ENCODE measurements at regions of chr22 and their contacts with region 1.

Region 1: GRCh38 chr22:41403532-41404318 is 22.0 kb downstream of the TEF start:
- DNase-seq: peak; percentile 58
- ATAC-seq: peak; percentile 97
- H3K4me3 ChIP-seq: no peak overlapping the region
- H3K27ac ChIP-seq: no peak overlapping the region
- H3K4me1 ChIP-seq: peaks cover 14% of the 10 kb centered on the region
- H3K27me3 ChIP-seq: no peaks in the 10 kb centered on the region
- CTCF ChIP-seq: peak; percentile 97 to 98 (median 97); a peak in 5 of 6 replicates
- EP300 ChIP-seq: no peak
- POLR2A ChIP-seq: no peak
- RAD21 ChIP-seq: peak; percentile 95

Region 2: DNA sequence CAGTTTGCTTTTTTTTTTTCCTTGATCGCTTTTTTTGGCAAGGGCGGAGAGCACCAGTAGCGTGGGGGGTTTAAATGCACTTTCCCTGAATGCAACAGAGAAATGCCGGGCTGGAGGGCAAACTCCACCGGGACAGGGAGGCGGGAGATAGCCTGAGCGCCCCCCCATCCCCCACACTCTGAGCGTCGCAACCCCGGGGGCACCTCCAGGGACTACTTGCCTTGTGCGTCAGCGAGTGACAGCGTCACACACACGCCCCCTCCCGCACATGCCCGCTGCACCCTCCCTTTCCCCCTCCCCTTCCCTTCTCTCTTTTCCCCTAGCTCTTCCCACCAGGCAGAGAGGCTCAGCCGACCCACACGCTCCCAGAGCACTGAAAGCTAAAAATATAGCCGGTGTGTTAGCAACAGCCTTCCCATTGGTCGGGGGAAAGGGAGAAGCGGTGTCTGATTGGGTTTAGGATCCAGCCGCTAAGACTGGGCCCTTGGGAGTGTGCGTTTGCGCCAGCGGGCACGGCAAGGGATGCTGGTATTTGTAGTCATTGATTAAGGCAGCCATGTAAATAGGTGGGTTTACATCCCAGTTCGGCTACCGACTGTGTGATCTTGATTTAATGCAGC is 44.6 kb after region 1 on chr22:
- CTCF ChIA-PET with region 1: interaction called, 26 read pairs
- POLR2A ChIA-PET with region 1: interaction called, 5 read pairs
- RAD21 ChIA-PET with region 1: interaction called, 12 read pairs
- SMC1A ChIA-PET with region 1: interaction called, 13 read pairs
- in situ Hi-C with region 1: no loop called
- intact Hi-C with region 1: loop called (anchors 2 kb)
- DNase-seq: peak; percentile 99
- ATAC-seq: peak; percentile 70
- H3K4me3 ChIP-seq: peak overlapping the region; percentile 86
- H3K27ac ChIP-seq: peak overlapping the region; percentile 88
- H3K4me1 ChIP-seq: no peaks in the 10 kb centered on the region
- H3K27me3 ChIP-seq: no peaks in the 10 kb centered on the region
- CTCF ChIP-seq: no peak
- EP300 ChIP-seq: peak; percentile 9 to 63; a peak in 2 of 4 replicates
- POLR2A ChIP-seq: no peak
- RAD21 ChIP-seq: no peak

Region 3: GRCh38 chr22:41468381-41469217 is 64.9 kb after region 1 on chr22 and contains the starts of genes ACO2 and PHF5A:
- CTCF ChIA-PET with region 1: interaction called, 23 read pairs
- POLR2A ChIA-PET with region 1: interaction called, 4 read pairs
- RAD21 ChIA-PET with region 1: interaction called, 13 read pairs
- SMC1A ChIA-PET with region 1: interaction called, 9 read pairs
- in situ Hi-C with region 1: no loop called
- intact Hi-C with region 1: no loop called
- DNase-seq: peak; percentile 98
- ATAC-seq: peak; percentile 95
- H3K4me3 ChIP-seq: peak within 1 kb of the TSS; percentile 80
- H3K27ac ChIP-seq: peak within 1 kb of the TSS; percentile 97
- H3K4me1 ChIP-seq: peaks cover 14% of the 10 kb centered on the region
- H3K27me3 ChIP-seq: no peaks in the 10 kb centered on the region
- CTCF ChIP-seq: no peak
- EP300 ChIP-seq: peak in 1 of 2 experiments; percentile 32; a peak in 1 of 4 replicates
- POLR2A ChIP-seq: peak; percentile 81
- RAD21 ChIP-seq: no peak
- polyA plus RNA-seq, gene ACO2: 21.4 to 22.3 TPM
- polyA plus RNA-seq, gene PHF5A: 40.5 to 77.0 TPM

Region 4: GRCh38 chr22:41501209-41501608 is 97.5 kb after region 1 on chr22:
- CTCF ChIA-PET with region 1: interaction called, 58 read pairs
- POLR2A ChIA-PET with region 1: interaction called, 3 read pairs
- RAD21 ChIA-PET with region 1: interaction called, 60 read pairs
- SMC1A ChIA-PET with region 1: interaction called, 62 read pairs
- in situ Hi-C with region 1: no loop called
- intact Hi-C with region 1: loop called (anchors 1 kb)
- DNase-seq: peak; percentile 27
- ATAC-seq: peak; percentile 93
- H3K4me3 ChIP-seq: no peak overlapping the region
- H3K27ac ChIP-seq: no peak overlapping the region
- H3K4me1 ChIP-seq: no peaks in the 10 kb centered on the region
- H3K27me3 ChIP-seq: no peaks in the 10 kb centered on the region
- CTCF ChIP-seq: peak; percentile 46 to 71 (median 52); a peak in 5 of 6 replicates
- EP300 ChIP-seq: no peak
- POLR2A ChIP-seq: no peak
- RAD21 ChIP-seq: peak; percentile 67

Region 5: GRCh38 chr22:41526837-41527799 is 123.4 kb after region 1 on chr22:
- CTCF ChIA-PET with region 1: interaction called, 105 read pairs
- POLR2A ChIA-PET with region 1: no interaction called
- RAD21 ChIA-PET with region 1: interaction called, 46 read pairs
- SMC1A ChIA-PET with region 1: interaction called, 27 read pairs
- in situ Hi-C with region 1: no loop called
- intact Hi-C with region 1: no loop called
- DNase-seq: no peak
- ATAC-seq: peak; percentile 81
- H3K4me3 ChIP-seq: no peak overlapping the region
- H3K27ac ChIP-seq: no peak overlapping the region
- H3K4me1 ChIP-seq: no peaks in the 10 kb centered on the region
- H3K27me3 ChIP-seq: no peaks in the 10 kb centered on the region
- CTCF ChIP-seq: peak; percentile 79 to 93 (median 79)
- EP300 ChIP-seq: no peak
- POLR2A ChIP-seq: peak; percentile 52; the same call in 1 of the 2 replicates
- RAD21 ChIP-seq: peak; percentile 70

Region 6: GRCh38 chr22:41543854-41544670 is 140.3 kb after region 1 on chr22 and contains the start of gene POLR3H:
- CTCF ChIA-PET with region 1: interaction called, 26 read pairs
- POLR2A ChIA-PET with region 1: no interaction called
- RAD21 ChIA-PET with region 1: interaction called, 5 read pairs
- SMC1A ChIA-PET with region 1: interaction called, 3 read pairs
- in situ Hi-C with region 1: no loop called
- intact Hi-C with region 1: no loop called
- DNase-seq: peak; percentile 90
- ATAC-seq: peak; percentile 97
- H3K4me3 ChIP-seq: peak within 1 kb of the TSS; percentile 88
- H3K27ac ChIP-seq: peak within 1 kb of the TSS; percentile 75
- H3K4me1 ChIP-seq: no peaks in the 10 kb centered on the region
- H3K27me3 ChIP-seq: no peaks in the 10 kb centered on the region
- CTCF ChIP-seq: peak; percentile 61 to 86 (median 77)
- EP300 ChIP-seq: no peak
- POLR2A ChIP-seq: peak; percentile 73
- RAD21 ChIP-seq: peak; percentile 28; the same call in 1 of the 2 replicates
- polyA plus RNA-seq, gene POLR3H: 3.5 to 5.8 TPM